GM12878 (cell line): ENCODE measurements at regions of chr7 and their contacts with region 1.

Region 1: GRCh38 chr7:35670856-35671569 is 23.9 kb downstream of the HERPUD2 start:
- DNase-seq: no peak
- ATAC-seq: no peak
- H3K4me3 ChIP-seq: no peak overlapping the region
- H3K27ac ChIP-seq: no peak overlapping the region
- H3K4me1 ChIP-seq: no peaks in the 10 kb centered on the region
- H3K27me3 ChIP-seq: no peaks in the 10 kb centered on the region
- CTCF ChIP-seq: no peak
- EP300 ChIP-seq: no peak
- POLR2A ChIP-seq: no peak
- RAD21 ChIP-seq: no peak

Region 2: GRCh38 chr7:35685781-35686180 is 14.8 kb after region 1 on chr7:
- CTCF ChIA-PET with region 1: interaction called, 4 read pairs
- POLR2A ChIA-PET with region 1: interaction called, 3 read pairs
- RAD21 ChIA-PET with region 1: no interaction called
- SMC1A ChIA-PET with region 1: interaction called, 31 read pairs
- in situ Hi-C with region 1: no loop called
- intact Hi-C with region 1: no loop called
- DNase-seq: no peak
- ATAC-seq: no peak
- H3K4me3 ChIP-seq: no peak overlapping the region
- H3K27ac ChIP-seq: no peak overlapping the region
- H3K4me1 ChIP-seq: peaks cover 8% of the 10 kb centered on the region; the same call in 1 of the 2 replicates
- H3K27me3 ChIP-seq: no peaks in the 10 kb centered on the region
- CTCF ChIP-seq: no peak
- EP300 ChIP-seq: no peak
- POLR2A ChIP-seq: no peak
- RAD21 ChIP-seq: no peak